Panc1 (cell line): ENCODE measurements at regions of chr3 and their contacts with region 1.

Region 1: GRCh38 chr3:39497753-39498152 is 30.3 kb downstream of the MOBP start:
- DNase-seq: no peak
- ATAC-seq: 0 out of 2 replicates have a peak, but pooled peaks have one; percentile 14
- H3K4me3 ChIP-seq: peak overlapping the region in 1 of 2 experiments; percentile 17; a peak in 2 of 4 replicates
- H3K27ac ChIP-seq: no peak overlapping the region
- H3K4me1 ChIP-seq: no peaks in the 10 kb centered on the region
- H3K27me3 ChIP-seq: peaks cover 3% of the 10 kb centered on the region
- CTCF ChIP-seq: no peak

Region 2: GRCh38 chr3:39447637-39448483 is 49.9 kb before region 1 on chr3:
- CTCF ChIA-PET with region 1: interaction called, 4 read pairs
- POLR2A ChIA-PET with region 1: no interaction called
- in situ Hi-C with region 1: no loop called
- intact Hi-C with region 1: loop called (anchors 1 kb)
- DNase-seq: peak; percentile 57
- ATAC-seq: peak; percentile 96
- H3K4me3 ChIP-seq: no peak overlapping the region
- H3K27ac ChIP-seq: no peak overlapping the region
- H3K4me1 ChIP-seq: no peaks in the 10 kb centered on the region
- H3K27me3 ChIP-seq: no peaks in the 10 kb centered on the region
- CTCF ChIP-seq: peak; percentile 82